Left ventricle myocardium superior (tissue), 1 donor: ENCODE measurements at regions of chrX and their contacts with region 1.

Region 1: DNA sequence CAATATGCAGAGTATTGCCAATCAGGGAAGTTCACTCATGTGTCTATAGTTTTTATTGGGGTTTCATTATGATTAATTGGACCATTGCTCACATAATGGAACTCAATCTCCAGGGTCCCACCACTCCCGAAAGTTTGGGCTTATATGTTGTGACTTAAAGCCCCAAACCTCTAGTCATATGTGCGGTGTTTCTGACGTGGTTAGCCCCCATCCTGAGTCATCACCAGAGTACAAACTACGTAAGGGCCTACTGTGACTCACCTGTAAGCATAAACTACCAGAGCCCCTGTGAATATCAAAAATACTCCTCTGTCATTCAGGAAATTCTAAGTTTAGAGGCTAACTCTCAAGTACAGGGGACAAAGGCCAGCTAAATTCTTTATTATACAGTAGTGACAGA is 5.4 kb downstream of the YIPF6 start:
- DNase-seq: no peak
- ATAC-seq: no peak

Region 2: GRCh38 chrX:68060506-68061205 is 443.6 kb before region 1 on chrX:
- intact Hi-C with region 1: no loop called
- DNase-seq: no peak
- ATAC-seq: no peak

Region 3: DNA sequence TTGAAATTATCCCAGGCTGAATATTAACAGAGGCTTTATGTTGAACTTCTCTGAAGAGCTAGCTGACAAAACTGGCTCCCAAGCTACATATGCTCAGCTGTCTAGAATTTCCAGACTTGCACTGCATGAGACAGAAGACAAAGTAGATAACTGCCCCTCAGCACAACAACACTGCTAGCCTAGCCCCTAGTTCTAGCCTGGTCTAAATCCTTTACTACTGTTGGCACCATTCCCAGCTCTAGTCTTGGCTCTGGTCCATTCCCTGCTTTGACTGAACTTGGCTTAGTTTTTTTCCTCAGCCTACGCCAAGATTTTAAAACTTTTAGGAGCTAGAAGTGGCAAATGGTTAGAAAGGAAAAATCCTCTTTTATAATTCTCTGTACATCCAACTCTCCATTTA is 63.3 kb before region 1 on chrX:
- intact Hi-C with region 1: no loop called
- DNase-seq: peak; percentile 58
- ATAC-seq: peak; percentile 78

Region 4: GRCh38 chrX:68574240-68574639 is 70.0 kb after region 1 on chrX:
- intact Hi-C with region 1: no loop called
- DNase-seq: no peak
- ATAC-seq: no peak

Region 5: GRCh38 chrX:68710870-68711576 is 206.8 kb after region 1 on chrX:
- intact Hi-C with region 1: loop called (anchors 10 kb)
- DNase-seq: no peak
- ATAC-seq: peak; percentile 83

Region 6: DNA sequence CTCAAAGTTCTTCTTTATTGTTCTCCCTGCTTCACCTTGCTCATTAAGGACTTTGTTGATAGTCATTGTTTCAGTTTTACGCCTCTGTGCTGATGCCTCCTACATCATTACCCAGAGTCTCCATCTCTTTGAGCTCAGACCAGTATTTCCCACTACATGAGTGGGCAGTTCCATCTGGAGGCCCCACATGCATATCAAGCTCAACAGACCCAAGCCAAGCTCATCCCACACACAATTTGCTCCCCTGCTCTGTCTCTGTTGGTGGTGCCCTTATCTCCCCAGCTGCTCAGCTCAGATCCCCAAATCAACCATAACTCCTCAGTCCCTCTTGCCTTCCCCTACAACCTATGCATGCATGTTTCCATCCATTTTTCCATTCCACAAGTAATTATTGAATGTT is 239.5 kb after region 1 on chrX:
- intact Hi-C with region 1: no loop called
- DNase-seq: no peak
- ATAC-seq: no peak